ENCODE measurements at regions of chr5 and their contacts with region 1.

Region 1: DNA sequence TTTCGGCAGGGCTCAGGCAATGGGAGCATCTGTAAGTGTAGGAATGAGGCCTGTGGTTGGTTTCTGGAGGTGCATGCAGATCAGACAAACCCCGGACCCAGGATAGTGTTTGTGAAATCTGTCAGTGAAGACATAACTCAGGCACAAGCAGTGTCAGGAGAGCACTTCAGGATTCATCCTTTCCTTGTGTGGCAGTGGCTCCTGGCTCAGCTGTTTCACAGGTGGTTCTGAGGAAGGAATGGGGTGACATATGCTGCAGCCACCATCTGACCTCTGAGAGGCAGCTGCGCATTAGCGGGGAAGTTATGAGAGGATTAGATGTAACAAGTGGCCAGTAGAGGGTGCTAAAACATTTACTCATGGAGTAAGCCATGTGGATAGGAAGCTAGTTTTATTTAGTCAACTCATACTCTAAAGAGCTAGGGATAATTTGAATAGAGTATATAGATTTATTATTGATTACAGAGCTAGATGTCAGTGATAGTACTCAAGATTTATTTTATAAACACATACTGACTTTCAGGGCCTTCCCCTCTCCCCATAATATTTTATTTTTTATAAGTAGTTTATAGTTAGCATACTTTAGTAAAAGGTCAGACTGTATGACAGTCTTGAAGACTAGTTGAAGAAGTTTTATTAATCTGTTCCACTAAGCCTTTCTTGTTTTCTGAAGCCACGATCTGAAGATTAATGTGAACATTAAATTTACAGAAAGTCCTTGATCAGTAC is 28.4 kb downstream of the NNT start:
- DNase-seq: peak; percentile 63
- ATAC-seq: peak; percentile 67
- H3K4me3 ChIP-seq: no peak overlapping the region
- H3K4me3 Mint-ChIP-seq: no peak overlapping the region
- H3K27ac ChIP-seq: no peak overlapping the region
- H3K27ac Mint-ChIP-seq: no peak overlapping the region
- H3K4me1 ChIP-seq: no peaks in the 10 kb centered on the region
- H3K4me1 Mint-ChIP-seq: peaks cover 2% of the 10 kb centered on the region
- H3K27me3 ChIP-seq: no peaks in the 10 kb centered on the region
- H3K27me3 Mint-ChIP-seq: no peaks in the 10 kb centered on the region
- CTCF ChIP-seq: peak; percentile 71

Region 2: DNA sequence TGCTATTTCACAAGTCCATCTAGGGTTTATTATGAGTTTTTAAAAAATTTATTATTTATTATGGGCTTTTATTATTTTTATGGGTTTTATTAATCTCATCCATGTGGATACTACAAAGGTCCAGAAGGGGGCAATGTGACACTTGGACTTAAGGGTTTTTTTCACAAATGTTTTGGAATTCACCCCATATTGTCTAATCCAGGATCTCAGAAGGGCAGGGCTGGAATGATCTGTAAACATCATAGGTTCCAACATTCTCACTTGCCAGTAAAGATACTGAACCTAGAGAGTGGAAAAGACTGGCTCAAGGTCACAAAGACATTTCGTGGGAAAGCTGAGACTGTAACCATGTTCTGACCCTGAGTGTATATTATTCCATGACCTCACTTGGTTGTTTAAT is 403.7 kb before region 1 on chr5:
- CTCF ChIA-PET with region 1: no interaction called
- POLR2A ChIA-PET with region 1: no interaction called
- intact Hi-C with region 1: no loop called
- DNase-seq: no peak
- ATAC-seq: no peak
- H3K4me3 ChIP-seq: no peak overlapping the region
- H3K4me3 Mint-ChIP-seq: no peak overlapping the region
- H3K27ac ChIP-seq: no peak overlapping the region
- H3K27ac Mint-ChIP-seq: no peak overlapping the region
- H3K4me1 ChIP-seq: no peaks in the 10 kb centered on the region
- H3K4me1 Mint-ChIP-seq: no peaks in the 10 kb centered on the region
- H3K27me3 ChIP-seq: no peaks in the 10 kb centered on the region
- H3K27me3 Mint-ChIP-seq: no peaks in the 10 kb centered on the region
- CTCF ChIP-seq: peak; percentile 16

Region 3: DNA sequence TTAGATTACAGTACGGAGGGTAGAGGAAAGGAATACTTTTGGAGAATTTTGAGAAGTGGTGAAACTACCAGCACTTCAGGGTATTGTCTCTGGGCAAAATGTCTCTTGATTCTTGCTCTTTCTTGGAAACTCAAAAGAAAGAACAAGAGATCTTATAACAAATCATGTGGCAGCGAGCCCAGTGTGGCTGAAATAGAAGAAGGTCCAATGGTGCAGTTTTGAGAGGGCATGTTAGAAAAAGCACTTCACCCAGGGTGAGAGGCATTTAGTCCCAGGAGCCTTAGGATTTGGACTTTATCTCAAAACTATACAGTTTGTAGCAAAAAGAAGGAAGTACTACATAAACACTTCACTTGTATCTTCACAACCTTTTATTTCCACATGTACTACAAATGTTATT is 11.1 kb after region 1 on chr5:
- CTCF ChIA-PET with region 1: interaction called, 13 read pairs
- POLR2A ChIA-PET with region 1: no interaction called
- intact Hi-C with region 1: no loop called
- DNase-seq: no peak
- ATAC-seq: no peak
- H3K4me3 ChIP-seq: no peak overlapping the region
- H3K4me3 Mint-ChIP-seq: no peak overlapping the region
- H3K27ac ChIP-seq: no peak overlapping the region
- H3K27ac Mint-ChIP-seq: no peak overlapping the region
- H3K4me1 ChIP-seq: no peaks in the 10 kb centered on the region
- H3K4me1 Mint-ChIP-seq: peaks cover 7% of the 10 kb centered on the region
- H3K27me3 ChIP-seq: no peaks in the 10 kb centered on the region
- H3K27me3 Mint-ChIP-seq: no peaks in the 10 kb centered on the region
- CTCF ChIP-seq: no peak

Region 4: DNA sequence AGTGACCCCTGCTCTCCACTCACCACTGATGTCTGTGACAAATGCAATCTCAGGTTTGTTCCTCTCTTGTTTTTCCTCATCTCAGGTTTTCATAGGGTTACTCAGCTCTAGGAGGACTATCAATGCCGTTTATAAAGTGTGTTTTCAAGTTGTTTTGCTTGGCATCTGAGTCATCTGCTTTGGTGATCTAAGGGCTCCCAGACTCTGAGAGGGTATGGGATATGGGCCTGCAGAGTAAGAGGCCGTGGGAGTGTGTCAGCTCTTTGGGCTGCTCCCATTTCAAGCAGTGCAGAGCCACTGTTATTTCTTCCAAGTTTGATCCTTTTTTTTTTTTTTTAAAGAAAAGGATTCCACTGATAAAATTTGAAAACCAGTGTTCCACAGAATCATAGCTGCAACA is 17.9 kb after region 1 on chr5:
- CTCF ChIA-PET with region 1: interaction called, 13 read pairs
- POLR2A ChIA-PET with region 1: no interaction called
- intact Hi-C with region 1: no loop called
- DNase-seq: no peak
- ATAC-seq: no peak
- H3K4me3 ChIP-seq: no peak overlapping the region
- H3K4me3 Mint-ChIP-seq: no peak overlapping the region
- H3K27ac ChIP-seq: no peak overlapping the region
- H3K27ac Mint-ChIP-seq: no peak overlapping the region
- H3K4me1 ChIP-seq: no peaks in the 10 kb centered on the region
- H3K4me1 Mint-ChIP-seq: no peaks in the 10 kb centered on the region
- H3K27me3 ChIP-seq: no peaks in the 10 kb centered on the region
- H3K27me3 Mint-ChIP-seq: no peaks in the 10 kb centered on the region
- CTCF ChIP-seq: no peak